Psoas muscle (tissue), 8 donors: ENCODE measurements at regions of chr20 and their contacts with region 1.

Region 1: DNA sequence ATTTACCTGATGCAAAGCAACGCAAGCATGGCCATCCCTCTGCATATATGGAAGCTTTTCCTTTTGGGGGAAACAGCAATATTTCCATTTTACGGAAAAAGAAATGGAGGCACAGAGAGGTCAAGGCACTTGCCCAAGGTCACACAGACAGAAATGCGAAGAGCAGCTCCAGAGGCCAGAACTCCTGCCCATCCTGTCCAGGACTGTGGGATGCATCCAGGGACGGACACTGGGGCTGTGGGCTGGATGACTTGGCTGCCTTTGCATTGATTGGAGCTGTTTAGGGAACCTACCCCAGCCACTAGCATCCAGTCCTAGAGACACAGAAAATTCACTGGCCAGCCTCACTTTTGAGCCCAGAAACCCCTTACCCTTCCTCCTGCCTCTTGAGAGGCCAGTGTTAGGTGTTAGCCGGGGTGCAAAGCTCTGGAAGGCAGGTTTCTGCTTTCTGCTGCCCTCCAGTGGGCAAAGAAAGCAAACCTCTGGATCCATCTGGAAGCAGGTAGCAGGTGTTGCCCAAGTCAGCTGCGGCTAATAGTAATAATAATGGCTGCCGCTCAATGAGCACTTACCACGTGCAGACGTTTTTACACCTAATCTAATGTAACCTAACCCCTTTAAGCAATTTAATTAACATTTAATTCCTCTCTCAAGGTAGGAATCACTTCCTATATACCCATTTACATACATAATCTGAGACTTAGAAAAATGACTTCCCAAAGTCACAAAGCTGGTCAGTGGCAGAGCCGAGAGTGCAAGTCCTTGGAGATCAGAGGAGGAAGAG is 31.7 kb upstream of the CCN5 start:
- DNase-seq: no peak
- ATAC-seq: peak; percentile 52 to 77 (median 60)
- H3K4me3 ChIP-seq: no peak overlapping the region
- H3K27ac ChIP-seq: no peak overlapping the region
- H3K4me1 ChIP-seq: peaks cover 7% of the 10 kb centered on the region
- H3K27me3 ChIP-seq: no peaks in the 10 kb centered on the region
- CTCF ChIP-seq: peak; percentile 67

Region 2: DNA sequence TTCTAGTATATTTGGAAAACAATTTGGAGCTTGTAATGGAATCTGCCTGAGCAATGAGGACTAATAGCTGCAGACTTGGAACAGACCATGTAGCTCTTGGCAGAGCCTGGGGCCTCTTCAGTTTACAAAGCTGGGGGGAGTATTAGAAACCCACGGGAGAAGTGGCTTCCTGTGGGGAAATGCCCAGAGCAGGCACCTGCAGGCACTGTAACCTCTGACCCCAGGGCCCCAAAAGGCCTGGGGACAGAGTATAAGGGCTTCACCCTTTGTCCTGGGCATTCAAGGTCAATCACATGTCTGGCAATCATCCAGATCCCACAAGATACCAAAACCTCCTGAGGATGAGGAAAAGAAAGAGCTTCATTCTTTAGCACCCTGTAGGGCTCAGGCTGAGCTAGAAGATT is 81.7 kb before region 1 on chr20:
- intact Hi-C with region 1: no loop called
- DNase-seq: peak; percentile 76 to 85
- ATAC-seq: peak; percentile 48 to 72 (median 56)
- H3K4me3 ChIP-seq: no peak overlapping the region
- H3K27ac ChIP-seq: peak overlapping the region; percentile 82
- H3K4me1 ChIP-seq: peaks cover 75% of the 10 kb centered on the region
- H3K27me3 ChIP-seq: no peaks in the 10 kb centered on the region
- CTCF ChIP-seq: no peak

Region 3: GRCh38 chr20:44733341-44734069 is 50.0 kb after region 1 on chr20:
- intact Hi-C with region 1: loop called (anchors 1 kb)
- DNase-seq: peak; percentile 66 to 80
- ATAC-seq: peak; percentile 55 to 67 (median 63)
- H3K4me3 ChIP-seq: no peak overlapping the region
- H3K27ac ChIP-seq: no peak overlapping the region
- H3K4me1 ChIP-seq: peaks cover 37% of the 10 kb centered on the region
- H3K27me3 ChIP-seq: no peaks in the 10 kb centered on the region
- CTCF ChIP-seq: peak; percentile 97

Region 4: GRCh38 chr20:44866703-44867335 is 183.4 kb after region 1 on chr20:
- intact Hi-C with region 1: loop called (anchors 2 to 5 kb)
- DNase-seq: no peak
- ATAC-seq: no peak
- H3K4me3 ChIP-seq: no peak overlapping the region
- H3K27ac ChIP-seq: no peak overlapping the region
- H3K4me1 ChIP-seq: peaks cover 7% of the 10 kb centered on the region
- H3K27me3 ChIP-seq: no peaks in the 10 kb centered on the region
- CTCF ChIP-seq: no peak